Activated naive CD4-positive, alpha-beta T cell treated with anti-CD3 and anti-CD28 coated beads for 36 hours (primary cell): ENCODE measurements at regions of chr12 and their contacts with region 1.

Region 1: GRCh38 chr12:22443379-22444316 is 100.7 kb downstream of the C2CD5 start:
- DNase-seq: peak; percentile 75
- H3K4me3 Mint-ChIP-seq: no peak overlapping the region
- H3K27ac Mint-ChIP-seq: no peak overlapping the region
- H3K4me1 Mint-ChIP-seq: peaks cover 3% of the 10 kb centered on the region
- H3K27me3 Mint-ChIP-seq: no peaks in the 10 kb centered on the region

Region 2: GRCh38 chr12:22083167-22083566 is 360.5 kb before region 1 on chr12:
- CTCF ChIA-PET with region 1: interaction called, 5 read pairs
- intact Hi-C with region 1: loop called (anchors 1 kb)
- DNase-seq: peak; percentile 43
- H3K4me3 Mint-ChIP-seq: no peak overlapping the region
- H3K27ac Mint-ChIP-seq: no peak overlapping the region
- H3K4me1 Mint-ChIP-seq: no peaks in the 10 kb centered on the region
- H3K27me3 Mint-ChIP-seq: no peaks in the 10 kb centered on the region

Region 3: GRCh38 chr12:22164139-22164538 is 279.5 kb before region 1 on chr12:
- CTCF ChIA-PET with region 1: interaction called, 3 read pairs
- intact Hi-C with region 1: loop called (anchors 5 kb)
- DNase-seq: peak; percentile 21
- H3K4me3 Mint-ChIP-seq: peak overlapping the region; percentile 3
- H3K27ac Mint-ChIP-seq: peak overlapping the region; percentile 1
- H3K4me1 Mint-ChIP-seq: peaks cover 40% of the 10 kb centered on the region
- H3K27me3 Mint-ChIP-seq: no peaks in the 10 kb centered on the region

Region 4: GRCh38 chr12:22190969-22191368 is 252.7 kb before region 1 on chr12:
- CTCF ChIA-PET with region 1: interaction called, 3 read pairs
- intact Hi-C with region 1: loop called (anchors 5 kb)
- DNase-seq: no peak
- H3K4me3 Mint-ChIP-seq: no peak overlapping the region
- H3K27ac Mint-ChIP-seq: no peak overlapping the region
- H3K4me1 Mint-ChIP-seq: no peaks in the 10 kb centered on the region
- H3K27me3 Mint-ChIP-seq: no peaks in the 10 kb centered on the region

Region 5: GRCh38 chr12:22287776-22288621 is 155.6 kb before region 1 on chr12:
- CTCF ChIA-PET with region 1: no interaction called
- intact Hi-C with region 1: loop called (anchors 5 kb)
- DNase-seq: peak; percentile 50
- H3K4me3 Mint-ChIP-seq: peak overlapping the region; percentile 45
- H3K27ac Mint-ChIP-seq: peak overlapping the region; percentile 47
- H3K4me1 Mint-ChIP-seq: peaks cover 22% of the 10 kb centered on the region
- H3K27me3 Mint-ChIP-seq: no peaks in the 10 kb centered on the region